ENCODE measurements at regions of chr12 and their contacts with region 1.

Region 1: DNA sequence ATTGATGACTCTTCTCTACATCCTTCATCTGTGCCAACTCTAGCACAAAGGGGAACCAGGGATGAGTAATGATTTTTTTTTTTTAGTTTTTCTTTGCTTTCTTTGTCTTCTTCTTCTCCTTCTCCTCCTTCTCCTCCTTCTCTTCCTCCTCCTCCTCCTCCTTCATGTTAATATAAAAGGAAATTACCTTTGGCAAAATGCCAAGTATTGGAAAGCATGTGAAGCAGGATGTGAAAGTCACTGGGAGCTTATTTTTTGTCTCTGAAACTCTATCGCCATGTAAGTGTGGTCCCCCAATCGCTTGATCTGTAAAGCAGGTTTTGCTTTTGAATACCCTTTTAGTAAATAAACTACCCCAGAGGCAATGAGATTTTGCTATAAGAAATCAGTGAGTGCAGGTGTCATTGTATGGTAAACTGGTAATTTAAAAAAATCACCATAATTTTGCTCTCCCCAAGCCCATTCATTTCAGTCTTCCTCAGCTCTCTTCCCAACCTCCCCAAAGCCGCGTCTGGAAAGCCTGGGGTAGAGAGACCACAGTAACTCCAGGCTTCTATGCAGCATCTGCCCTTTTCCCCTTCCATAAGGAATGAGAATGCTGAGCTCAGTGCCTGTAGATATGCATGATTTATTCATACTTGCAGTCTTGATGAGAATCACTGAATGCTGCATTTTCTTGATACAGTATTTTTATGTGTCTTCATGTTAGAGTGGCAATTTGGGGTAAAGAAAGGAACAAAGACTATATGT is 388.7 kb downstream of the TMEM117 start:
- DNase-seq: no peak
- ATAC-seq: no peak
- H3K4me3 ChIP-seq: no peak overlapping the region
- H3K4me3 Mint-ChIP-seq: no peak overlapping the region
- H3K27ac ChIP-seq: no peak overlapping the region
- H3K27ac Mint-ChIP-seq: no peak overlapping the region
- H3K4me1 ChIP-seq: no peaks in the 10 kb centered on the region
- H3K4me1 Mint-ChIP-seq: no peaks in the 10 kb centered on the region
- H3K27me3 ChIP-seq: no peaks in the 10 kb centered on the region
- H3K27me3 Mint-ChIP-seq: no peaks in the 10 kb centered on the region

Region 2: DNA sequence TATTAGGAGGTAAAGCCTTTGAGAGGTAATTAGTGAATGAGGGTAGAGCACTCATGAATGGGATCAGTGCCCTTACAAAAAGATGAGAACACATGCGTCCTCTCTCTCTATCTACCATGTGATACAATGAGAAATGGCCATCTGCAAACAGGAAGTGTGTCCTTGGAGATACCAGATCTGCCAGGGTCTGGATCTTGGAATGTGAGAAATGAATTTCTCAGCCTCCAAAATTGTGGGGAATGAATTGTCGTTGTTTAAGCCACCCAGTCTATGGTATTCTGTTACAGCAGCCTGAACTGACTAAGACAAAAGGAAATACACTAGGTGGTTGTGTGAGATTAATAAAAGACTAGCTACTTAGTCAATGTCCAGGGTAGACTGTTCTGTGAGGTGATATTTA is 284.9 kb after region 1 on chr12:
- CTCF ChIA-PET with region 1: no interaction called
- POLR2A ChIA-PET with region 1: no interaction called
- DNase-seq: no peak
- ATAC-seq: no peak
- H3K4me3 ChIP-seq: no peak overlapping the region
- H3K4me3 Mint-ChIP-seq: no peak overlapping the region
- H3K27ac ChIP-seq: no peak overlapping the region
- H3K27ac Mint-ChIP-seq: no peak overlapping the region
- H3K4me1 ChIP-seq: no peaks in the 10 kb centered on the region
- H3K4me1 Mint-ChIP-seq: no peaks in the 10 kb centered on the region
- H3K27me3 ChIP-seq: no peaks in the 10 kb centered on the region
- H3K27me3 Mint-ChIP-seq: no peaks in the 10 kb centered on the region

Region 3: GRCh38 chr12:45257185-45257930 is 1032.8 kb after region 1 on chr12:
- CTCF ChIA-PET with region 1: interaction called in 1 of 2 experiments, 10 read pairs
- POLR2A ChIA-PET with region 1: no interaction called
- DNase-seq: no peak
- ATAC-seq: no peak
- H3K4me3 ChIP-seq: no peak overlapping the region
- H3K4me3 Mint-ChIP-seq: no peak overlapping the region
- H3K27ac ChIP-seq: no peak overlapping the region
- H3K27ac Mint-ChIP-seq: no peak overlapping the region
- H3K4me1 ChIP-seq: peaks cover 5 to 8% of the 10 kb centered on the region in 2 experiments
- H3K4me1 Mint-ChIP-seq: peaks cover 30 to 49% (median 42%) of the 10 kb centered on the region in 3 donors
- H3K27me3 ChIP-seq: no peaks in the 10 kb centered on the region
- H3K27me3 Mint-ChIP-seq: no peaks in the 10 kb centered on the region

Measured in T-cell (primary cell).